MCF 10A (cell line): ENCODE measurements at regions of chr18 and their contacts with region 1.

Region 1: GRCh38 chr18:50573679-50574078 is 13.8 kb downstream of the MAPK4 start:
- DNase-seq: peak; percentile 25
- H3K4me3 Mint-ChIP-seq: no peak overlapping the region
- H3K27ac Mint-ChIP-seq: no peak overlapping the region
- H3K4me1 Mint-ChIP-seq: peaks cover 3% of the 10 kb centered on the region
- H3K27me3 Mint-ChIP-seq: peaks cover 44% of the 10 kb centered on the region
- CTCF ChIP-seq: peak; percentile 17

Region 2: DNA sequence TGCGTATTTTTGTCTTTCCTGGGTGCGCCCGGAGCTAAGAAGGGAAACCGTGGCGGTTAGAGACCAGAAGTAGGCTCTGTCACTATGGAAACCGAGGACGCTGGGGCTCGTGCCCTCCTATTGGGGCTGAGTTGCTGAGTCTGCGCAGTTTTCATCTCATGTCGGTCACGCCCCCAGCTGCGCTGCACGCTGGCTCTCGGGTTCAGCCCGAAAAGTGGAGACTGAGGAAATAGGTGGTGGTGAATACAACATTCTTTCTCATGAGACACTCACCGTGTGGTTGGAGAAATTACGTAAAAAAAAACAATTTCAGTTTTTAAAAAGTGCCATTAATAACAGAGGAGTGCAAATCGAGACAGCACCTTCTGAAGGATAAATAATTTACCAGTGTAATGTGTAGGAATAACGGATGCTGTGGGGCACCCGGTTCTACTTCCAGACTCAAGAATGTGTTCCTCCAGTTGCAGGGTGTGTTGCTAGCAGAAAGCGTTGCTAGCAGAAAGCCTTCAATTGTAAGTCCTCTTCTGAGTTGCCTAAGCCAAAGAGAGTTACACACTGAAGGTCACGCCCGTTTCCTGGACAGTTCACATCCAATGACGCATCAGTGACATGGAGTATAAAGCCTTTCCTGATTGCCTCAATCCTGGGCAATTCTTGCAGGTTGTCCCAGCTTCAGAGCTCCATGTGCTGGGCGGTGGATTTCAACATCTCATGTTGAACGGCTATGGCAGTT is 265.8 kb before region 1 on chr18:
- CTCF ChIA-PET with region 1: no interaction called
- POLR2A ChIA-PET with region 1: no interaction called
- intact Hi-C with region 1: no loop called
- DNase-seq: peak; percentile 100
- H3K4me3 Mint-ChIP-seq: peak overlapping the region; percentile 88
- H3K27ac Mint-ChIP-seq: peak overlapping the region; percentile 94
- H3K4me1 Mint-ChIP-seq: peaks cover 13% of the 10 kb centered on the region
- H3K27me3 Mint-ChIP-seq: no peaks in the 10 kb centered on the region
- CTCF ChIP-seq: no peak

Region 3: GRCh38 chr18:50644810-50645209 is 71.1 kb after region 1 on chr18:
- CTCF ChIA-PET with region 1: interaction called, 3 read pairs
- POLR2A ChIA-PET with region 1: no interaction called
- intact Hi-C with region 1: loop called (anchors 10 kb)
- DNase-seq: peak; percentile 60
- H3K4me3 Mint-ChIP-seq: no peak overlapping the region
- H3K27ac Mint-ChIP-seq: no peak overlapping the region
- H3K4me1 Mint-ChIP-seq: peaks cover 5% of the 10 kb centered on the region
- H3K27me3 Mint-ChIP-seq: no peaks in the 10 kb centered on the region
- CTCF ChIP-seq: no peak

Region 4: GRCh38 chr18:50786864-50787263 is 213.2 kb after region 1 on chr18:
- CTCF ChIA-PET with region 1: no interaction called
- POLR2A ChIA-PET with region 1: no interaction called
- intact Hi-C with region 1: loop called (anchors 2 kb)
- DNase-seq: no peak
- H3K4me3 Mint-ChIP-seq: no peak overlapping the region
- H3K27ac Mint-ChIP-seq: no peak overlapping the region
- H3K4me1 Mint-ChIP-seq: no peaks in the 10 kb centered on the region
- H3K27me3 Mint-ChIP-seq: peaks cover 16% of the 10 kb centered on the region
- CTCF ChIP-seq: no peak

Region 5: DNA sequence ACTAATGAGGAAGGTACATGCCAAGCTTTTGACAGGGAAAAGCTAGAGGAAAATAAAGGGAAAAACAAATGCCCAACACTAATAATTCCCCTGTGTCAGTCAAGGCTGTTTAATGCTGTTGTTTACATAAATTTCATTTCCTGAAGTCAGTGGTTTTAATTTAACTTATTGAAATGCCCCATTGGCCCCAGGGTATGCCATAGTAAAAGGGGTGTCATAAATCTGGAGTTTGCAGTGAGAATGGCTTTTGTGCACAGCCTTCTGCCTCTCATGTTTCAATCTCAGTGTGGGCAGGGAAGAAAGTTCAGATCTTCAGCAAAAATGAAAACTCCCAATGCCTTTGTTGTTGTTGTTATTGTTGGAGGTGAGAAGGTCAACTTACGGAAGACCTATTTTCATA is 1216.2 kb after region 1 on chr18:
- CTCF ChIA-PET with region 1: no interaction called
- POLR2A ChIA-PET with region 1: no interaction called
- intact Hi-C with region 1: no loop called
- DNase-seq: no peak
- H3K4me3 Mint-ChIP-seq: no peak overlapping the region
- H3K27ac Mint-ChIP-seq: no peak overlapping the region
- H3K4me1 Mint-ChIP-seq: no peaks in the 10 kb centered on the region
- H3K27me3 Mint-ChIP-seq: no peaks in the 10 kb centered on the region
- CTCF ChIP-seq: no peak